Activated T-helper 2 cell treated with anti-CD3 and anti-CD28 coated beads, Interferon-gamma antibody, Interleukin-2, Interleukin-4, amounts not matched to agents 10 μg/mL and 5 μg/mL and 100 μg/mL, durations not matched to agents 14 hours and 24 hours and 36 hours (primary cell): ENCODE measurements at regions of chr20 and their contacts with region 1.

Region 1: DNA sequence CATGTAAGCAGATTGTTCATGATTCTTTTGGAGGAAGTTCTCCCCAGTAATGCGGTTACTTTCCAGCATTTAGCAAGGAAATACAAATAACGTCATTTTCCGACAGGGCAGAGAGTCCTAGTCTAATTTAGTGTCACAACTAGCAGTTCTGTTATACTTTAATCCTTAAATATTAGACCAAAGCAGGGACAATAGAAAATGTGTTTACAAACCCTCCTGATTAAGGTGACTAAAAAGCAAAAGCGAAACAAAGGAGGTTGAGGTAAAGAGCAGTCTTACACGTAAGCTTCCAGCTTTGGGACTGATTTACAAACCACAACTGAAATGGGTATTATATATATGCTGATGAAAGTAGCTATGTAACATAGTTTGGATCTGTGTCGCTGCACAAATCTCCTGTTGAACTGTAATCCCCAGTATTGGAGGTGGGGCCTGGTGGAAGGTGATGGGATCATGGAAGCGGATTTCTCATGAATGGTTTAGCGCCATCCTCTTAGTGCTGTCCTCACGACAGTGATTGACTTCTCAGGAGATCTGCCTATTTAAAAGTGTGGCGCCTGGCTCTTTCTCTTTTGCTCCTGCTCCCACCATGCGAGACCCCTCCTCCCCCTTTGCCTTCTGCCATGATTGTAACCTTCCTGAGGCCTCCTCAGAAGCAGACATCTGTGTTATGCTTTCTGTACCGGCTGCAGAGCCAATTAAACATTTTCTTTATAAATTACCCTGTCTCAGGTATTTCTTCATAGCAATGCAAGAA is 81.9 kb downstream of the PLCB1 start:
- DNase-seq: no peak
- H3K4me3 Mint-ChIP-seq: peak overlapping the region; percentile 74
- H3K27ac Mint-ChIP-seq: peak overlapping the region; percentile 67
- H3K4me1 Mint-ChIP-seq: peaks cover 65% of the 10 kb centered on the region
- H3K27me3 Mint-ChIP-seq: peaks cover 3% of the 10 kb centered on the region

Region 2: DNA sequence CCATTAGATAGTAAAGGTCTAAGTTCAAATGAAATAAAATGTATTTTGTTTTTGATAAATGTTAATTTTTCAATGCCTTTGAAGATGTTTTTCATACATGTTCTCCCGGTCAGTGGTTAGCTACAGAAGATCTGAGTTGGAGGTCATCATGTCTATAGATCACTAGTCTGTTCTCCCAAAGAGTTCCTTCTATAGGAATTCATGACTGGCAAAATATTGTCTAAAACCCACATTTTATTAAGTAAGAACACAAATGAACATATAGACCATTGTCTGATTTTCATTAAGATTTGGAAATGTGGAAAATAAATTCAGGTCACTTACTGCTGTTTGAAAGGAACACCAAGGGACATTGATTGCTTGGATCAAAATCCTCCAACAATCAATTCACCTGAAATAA is 297.4 kb before region 1 on chr20:
- intact Hi-C with region 1: no loop called
- DNase-seq: no peak
- H3K4me3 Mint-ChIP-seq: no peak overlapping the region
- H3K27ac Mint-ChIP-seq: no peak overlapping the region
- H3K4me1 Mint-ChIP-seq: no peaks in the 10 kb centered on the region
- H3K27me3 Mint-ChIP-seq: no peaks in the 10 kb centered on the region

Region 3: DNA sequence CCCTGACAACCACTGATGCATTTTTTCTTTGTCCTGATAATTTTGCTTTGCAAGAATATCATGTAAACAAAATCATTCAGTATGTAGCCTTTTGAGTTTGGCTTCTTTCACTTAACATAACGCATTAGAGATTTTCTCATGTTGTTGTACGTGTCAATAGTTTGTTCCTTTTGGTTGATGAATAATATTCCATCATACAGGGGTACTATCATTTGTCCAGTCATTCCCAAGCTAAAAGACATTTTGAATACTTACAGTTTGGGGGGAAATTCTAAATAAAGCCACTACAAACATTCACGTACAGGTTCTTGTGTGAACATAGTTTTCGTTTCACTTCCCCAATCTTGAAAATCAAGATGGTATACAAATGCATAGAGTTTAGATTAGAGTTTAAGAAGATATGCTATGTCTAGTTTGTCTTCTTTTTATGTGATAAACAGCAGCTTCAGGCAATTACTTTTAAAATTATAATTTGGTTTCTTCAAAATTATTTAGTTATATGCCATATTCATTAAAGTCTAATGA is 278.9 kb before region 1 on chr20:
- intact Hi-C with region 1: no loop called
- DNase-seq: no peak
- H3K4me3 Mint-ChIP-seq: no peak overlapping the region
- H3K27ac Mint-ChIP-seq: no peak overlapping the region
- H3K4me1 Mint-ChIP-seq: no peaks in the 10 kb centered on the region
- H3K27me3 Mint-ChIP-seq: peaks cover 8% of the 10 kb centered on the region

Region 4: GRCh38 chr20:8131598-8132483 is 82.2 kb before region 1 on chr20 and contains the start of gene PLCB1:
- intact Hi-C with region 1: loop called (anchors 2 kb)
- DNase-seq: peak; percentile 72
- H3K4me3 Mint-ChIP-seq: peak within 1 kb of the TSS; percentile 66
- H3K27ac Mint-ChIP-seq: no peak within 1 kb of the TSS
- H3K4me1 Mint-ChIP-seq: peaks cover 11% of the 10 kb centered on the region
- H3K27me3 Mint-ChIP-seq: peaks cover 51% of the 10 kb centered on the region
- total RNA-seq, gene PLCB1: 2.6 TPM in 2 replicates

Region 5: GRCh38 chr20:8234580-8234979 is 20.6 kb after region 1 on chr20:
- intact Hi-C with region 1: no loop called
- DNase-seq: no peak
- H3K4me3 Mint-ChIP-seq: no peak overlapping the region
- H3K27ac Mint-ChIP-seq: no peak overlapping the region
- H3K4me1 Mint-ChIP-seq: no peaks in the 10 kb centered on the region
- H3K27me3 Mint-ChIP-seq: peaks cover 1% of the 10 kb centered on the region

Region 6: GRCh38 chr20:8271727-8272126 is 57.7 kb after region 1 on chr20:
- intact Hi-C with region 1: loop called (anchors 2 kb)
- DNase-seq: no peak
- H3K4me3 Mint-ChIP-seq: no peak overlapping the region
- H3K27ac Mint-ChIP-seq: peak overlapping the region; percentile 33
- H3K4me1 Mint-ChIP-seq: peaks cover 22% of the 10 kb centered on the region
- H3K27me3 Mint-ChIP-seq: peaks cover 6% of the 10 kb centered on the region

Region 7: DNA sequence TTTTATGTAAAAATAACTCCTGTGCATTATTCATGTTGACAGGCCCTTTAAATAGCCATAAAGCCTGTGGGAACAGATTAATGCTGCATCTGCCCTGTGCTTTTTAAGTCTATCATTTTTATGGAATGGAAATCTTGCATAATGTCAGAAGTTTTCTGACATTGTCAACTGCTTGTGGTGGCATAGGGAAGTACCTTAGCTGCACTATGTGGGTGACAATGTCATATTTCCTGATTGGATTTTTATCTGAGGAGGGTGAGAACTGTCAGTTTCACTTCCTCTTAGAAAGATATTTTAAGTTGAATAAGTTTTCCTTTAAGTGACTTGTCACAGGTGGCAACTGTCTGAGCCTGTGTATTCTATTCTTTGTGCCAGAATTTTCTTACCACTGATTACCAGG is 185.9 kb after region 1 on chr20:
- intact Hi-C with region 1: loop called (anchors 5 kb)
- DNase-seq: no peak
- H3K4me3 Mint-ChIP-seq: no peak overlapping the region
- H3K27ac Mint-ChIP-seq: no peak overlapping the region
- H3K4me1 Mint-ChIP-seq: peaks cover 13% of the 10 kb centered on the region
- H3K27me3 Mint-ChIP-seq: peaks cover 18% of the 10 kb centered on the region